ENCODE measurements at regions of chr13 and their contacts with region 1.

Region 1: DNA sequence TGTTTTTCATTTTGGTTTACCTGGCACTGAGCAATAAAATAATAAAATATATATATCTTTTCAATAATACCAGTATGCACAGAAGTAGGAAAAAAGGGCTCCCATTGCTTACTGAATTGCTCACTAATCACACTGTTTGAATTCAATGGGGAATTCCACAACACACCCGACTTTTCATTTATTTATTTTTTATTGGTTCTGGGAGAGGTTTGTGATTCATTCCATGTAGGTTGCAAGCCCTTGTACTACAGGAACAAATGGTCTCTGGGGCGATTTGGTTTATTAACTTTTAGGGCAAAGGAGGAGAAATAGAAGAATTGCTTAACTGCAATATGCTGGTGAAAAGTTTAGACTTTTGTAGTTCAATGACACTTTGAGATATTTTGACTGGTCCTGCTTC is 207.4 kb downstream of the DCT start:
- DNase-seq: no peak
- ATAC-seq: no peak
- H3K4me3 Mint-ChIP-seq: no peak overlapping the region
- H3K27ac Mint-ChIP-seq: no peak overlapping the region
- H3K4me1 Mint-ChIP-seq: no peaks in the 10 kb centered on the region
- H3K27me3 Mint-ChIP-seq: no peaks in the 10 kb centered on the region

Region 2: DNA sequence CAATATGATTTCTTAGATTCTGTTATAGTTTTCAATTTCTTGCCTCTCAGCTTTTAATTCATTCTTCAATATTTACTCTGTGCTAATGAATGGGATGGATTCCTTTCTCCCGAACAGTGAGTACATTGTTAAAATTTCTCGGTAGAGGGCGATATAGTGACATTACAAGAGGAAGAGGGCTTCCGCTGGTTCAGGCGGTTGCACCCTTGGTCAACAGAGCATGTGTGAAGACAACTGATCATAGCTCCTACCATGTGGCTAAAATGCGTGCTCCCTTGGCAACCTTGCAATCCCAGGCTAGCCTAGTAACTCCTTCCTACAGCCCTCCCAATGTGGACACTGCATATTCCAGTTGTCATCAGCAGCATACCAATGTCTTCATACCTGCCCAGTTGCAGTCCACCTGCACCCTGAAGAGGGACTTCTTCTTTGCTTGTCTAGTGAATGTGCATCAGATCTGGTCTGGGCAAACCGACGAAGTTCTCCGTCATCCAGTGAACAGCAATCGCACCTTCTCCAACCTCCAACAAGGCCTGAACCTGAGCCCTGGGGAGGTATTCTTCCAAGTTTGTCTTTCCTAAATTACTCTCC is 1698.5 kb before region 1 on chr13:
- CTCF ChIA-PET with region 1: no interaction called
- POLR2A ChIA-PET with region 1: no interaction called
- intact Hi-C with region 1: no loop called
- DNase-seq: no peak
- ATAC-seq: no peak
- H3K4me3 Mint-ChIP-seq: no peak overlapping the region
- H3K27ac Mint-ChIP-seq: no peak overlapping the region
- H3K4me1 Mint-ChIP-seq: no peaks in the 10 kb centered on the region
- H3K27me3 Mint-ChIP-seq: no peaks in the 10 kb centered on the region

Region 3: DNA sequence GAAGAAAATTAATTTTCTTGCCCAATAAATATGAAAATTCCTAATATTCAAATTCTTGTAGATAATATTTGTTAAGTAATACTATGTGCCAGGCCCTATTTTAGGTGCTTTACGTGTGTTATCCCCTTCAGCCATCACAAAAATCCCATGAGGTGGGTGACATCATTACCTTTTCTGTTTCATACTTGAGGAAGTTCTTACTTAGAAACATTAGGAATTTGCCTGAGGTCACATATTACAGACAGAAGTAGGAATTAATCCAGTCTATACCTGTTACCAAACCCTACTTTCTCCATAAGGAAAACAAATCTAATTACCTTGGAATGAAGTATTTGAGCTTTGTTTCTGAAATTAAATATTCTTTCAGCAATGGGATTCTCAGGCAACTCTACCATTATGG is 709.4 kb before region 1 on chr13:
- CTCF ChIA-PET with region 1: no interaction called
- POLR2A ChIA-PET with region 1: interaction called, 10 read pairs
- intact Hi-C with region 1: no loop called
- DNase-seq: no peak
- ATAC-seq: no peak
- H3K4me3 Mint-ChIP-seq: no peak overlapping the region
- H3K27ac Mint-ChIP-seq: no peak overlapping the region
- H3K4me1 Mint-ChIP-seq: no peaks in the 10 kb centered on the region
- H3K27me3 Mint-ChIP-seq: no peaks in the 10 kb centered on the region

Region 4: GRCh38 chr13:94192431-94192975 is 79.5 kb before region 1 on chr13:
- CTCF ChIA-PET with region 1: no interaction called
- POLR2A ChIA-PET with region 1: no interaction called
- intact Hi-C with region 1: no loop called
- DNase-seq: peak; percentile 29
- ATAC-seq: peak; percentile 39
- H3K4me3 Mint-ChIP-seq: no peak overlapping the region
- H3K27ac Mint-ChIP-seq: no peak overlapping the region
- H3K4me1 Mint-ChIP-seq: no peaks in the 10 kb centered on the region
- H3K27me3 Mint-ChIP-seq: no peaks in the 10 kb centered on the region

Measured in activated CD4-positive, alpha-beta T cell treated with anti-CD3 and anti-CD28 coated beads for 36 hours (primary cell).